ENCODE measurements at regions of chr4 and their contacts with region 1.

Region 1: GRCh38 chr4:3292571-3293400 is at the start of gene RGS12:
- DNase-seq: peak; percentile 91
- H3K4me3 ChIP-seq: peak within 1 kb of the TSS; percentile 70 to 76 (median 75)
- H3K27ac ChIP-seq: peak within 1 kb of the TSS; percentile 78
- H3K4me1 ChIP-seq: peaks cover 18% of the 10 kb centered on the region
- H3K27me3 ChIP-seq: no peaks in the 10 kb centered on the region
- CTCF ChIP-seq: no peak
- POLR2A ChIP-seq: peak; percentile 70
- total RNA-seq, gene RGS12: 75.4 and 78.0 TPM in 2 replicates

Region 2: GRCh38 chr4:3074078-3074795 is 218.5 kb before region 1 on chr4 and contains the starts of genes HTT and HTT-AS:
- CTCF ChIA-PET with region 1: no interaction called
- POLR2A ChIA-PET with region 1: no interaction called
- dilution Hi-C with region 1: no loop called
- intact Hi-C with region 1: loop called (anchors 5 kb)
- DNase-seq: peak; percentile 97
- H3K4me3 ChIP-seq: peak within 1 kb of the TSS; percentile 64 to 86 (median 79)
- H3K27ac ChIP-seq: peak within 1 kb of the TSS; percentile 78
- H3K4me1 ChIP-seq: peaks cover 13% of the 10 kb centered on the region
- H3K27me3 ChIP-seq: no peaks in the 10 kb centered on the region
- CTCF ChIP-seq: peak in 1 of 2 donors; percentile 13
- POLR2A ChIP-seq: peak; percentile 70
- total RNA-seq, gene HTT: 61.2 and 63.2 TPM in 2 replicates
- total RNA-seq, gene HTT-AS: not detected in 2 replicates

Region 3: DNA sequence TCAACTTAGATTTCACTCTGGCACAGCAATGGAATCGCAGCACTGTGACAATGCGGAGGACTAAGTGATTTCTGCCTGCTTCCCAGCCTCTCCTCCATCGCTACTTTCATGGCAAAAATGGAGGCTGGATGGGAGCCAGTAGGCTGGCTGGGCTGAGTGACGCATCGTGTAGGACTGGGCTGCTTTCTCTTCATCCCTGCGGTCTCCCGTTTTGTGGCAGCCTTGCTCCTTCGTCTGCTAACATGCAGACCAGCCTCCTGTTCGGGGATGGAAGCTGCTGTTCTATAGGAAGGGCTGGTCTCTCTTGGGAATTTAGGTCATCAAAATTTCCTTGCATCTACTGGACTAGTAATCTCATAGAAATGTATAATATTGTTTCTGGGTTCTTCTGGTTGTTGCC is 15.8 kb before region 1 on chr4:
- CTCF ChIA-PET with region 1: no interaction called
- POLR2A ChIA-PET with region 1: no interaction called
- dilution Hi-C with region 1: no loop called
- intact Hi-C with region 1: no loop called
- DNase-seq: no peak
- H3K4me3 ChIP-seq: no peak overlapping the region
- H3K27ac ChIP-seq: no peak overlapping the region
- H3K4me1 ChIP-seq: no peaks in the 10 kb centered on the region
- H3K27me3 ChIP-seq: peaks cover under 1 to 14% of the 10 kb centered on the region in 2 experiments
- CTCF ChIP-seq: no peak
- POLR2A ChIP-seq: no peak

Region 4: DNA sequence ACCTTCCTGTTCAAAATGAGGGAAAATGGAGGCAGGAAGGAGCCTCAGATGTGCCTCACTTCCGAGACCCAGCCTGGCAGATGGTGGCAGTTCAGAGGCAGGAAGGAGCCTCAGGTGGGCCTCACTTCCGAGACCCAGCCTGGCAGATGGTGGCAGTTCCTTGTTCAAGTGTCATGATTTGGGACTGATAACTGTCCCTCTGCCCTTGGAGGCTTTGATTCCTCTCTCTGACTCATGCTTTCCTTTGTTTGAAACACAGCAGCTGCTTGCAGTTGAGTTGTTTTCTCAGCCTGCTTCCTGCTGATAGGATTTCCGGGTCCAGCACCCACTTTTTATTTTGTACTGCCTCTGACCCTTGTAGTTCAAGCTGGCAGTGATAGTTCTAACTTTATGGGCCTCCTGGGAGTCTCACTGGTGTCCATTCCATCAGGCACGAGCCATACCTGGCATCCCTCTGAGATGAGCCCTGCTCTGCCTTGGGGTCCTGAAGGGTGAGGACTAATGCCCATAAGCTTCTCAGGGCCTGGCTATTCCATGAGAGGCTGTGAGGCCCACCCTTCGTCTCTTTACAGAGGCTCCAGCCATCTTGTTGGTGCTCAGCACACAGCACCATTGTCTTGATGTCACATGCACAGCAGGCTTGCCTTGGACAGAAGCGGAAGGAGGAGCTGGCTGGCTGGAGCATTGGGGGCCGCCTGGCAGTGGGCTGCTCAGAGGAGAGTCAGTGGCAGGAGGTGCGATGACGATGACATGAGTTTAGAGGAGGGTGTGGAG is 13.0 kb after region 1 on chr4:
- CTCF ChIA-PET with region 1: interaction called, 5 read pairs
- POLR2A ChIA-PET with region 1: interaction called, 4 read pairs
- dilution Hi-C with region 1: no loop called
- intact Hi-C with region 1: loop called (anchors 1 kb)
- DNase-seq: peak; percentile 95
- H3K4me3 ChIP-seq: no peak overlapping the region
- H3K27ac ChIP-seq: peak overlapping the region; percentile 83
- H3K4me1 ChIP-seq: peaks cover 63% of the 10 kb centered on the region
- H3K27me3 ChIP-seq: no peaks in the 10 kb centered on the region
- CTCF ChIP-seq: no peak
- POLR2A ChIP-seq: peak; percentile 70